ENCODE measurements at regions of chr16 and their contacts with region 1.

Region 1: DNA sequence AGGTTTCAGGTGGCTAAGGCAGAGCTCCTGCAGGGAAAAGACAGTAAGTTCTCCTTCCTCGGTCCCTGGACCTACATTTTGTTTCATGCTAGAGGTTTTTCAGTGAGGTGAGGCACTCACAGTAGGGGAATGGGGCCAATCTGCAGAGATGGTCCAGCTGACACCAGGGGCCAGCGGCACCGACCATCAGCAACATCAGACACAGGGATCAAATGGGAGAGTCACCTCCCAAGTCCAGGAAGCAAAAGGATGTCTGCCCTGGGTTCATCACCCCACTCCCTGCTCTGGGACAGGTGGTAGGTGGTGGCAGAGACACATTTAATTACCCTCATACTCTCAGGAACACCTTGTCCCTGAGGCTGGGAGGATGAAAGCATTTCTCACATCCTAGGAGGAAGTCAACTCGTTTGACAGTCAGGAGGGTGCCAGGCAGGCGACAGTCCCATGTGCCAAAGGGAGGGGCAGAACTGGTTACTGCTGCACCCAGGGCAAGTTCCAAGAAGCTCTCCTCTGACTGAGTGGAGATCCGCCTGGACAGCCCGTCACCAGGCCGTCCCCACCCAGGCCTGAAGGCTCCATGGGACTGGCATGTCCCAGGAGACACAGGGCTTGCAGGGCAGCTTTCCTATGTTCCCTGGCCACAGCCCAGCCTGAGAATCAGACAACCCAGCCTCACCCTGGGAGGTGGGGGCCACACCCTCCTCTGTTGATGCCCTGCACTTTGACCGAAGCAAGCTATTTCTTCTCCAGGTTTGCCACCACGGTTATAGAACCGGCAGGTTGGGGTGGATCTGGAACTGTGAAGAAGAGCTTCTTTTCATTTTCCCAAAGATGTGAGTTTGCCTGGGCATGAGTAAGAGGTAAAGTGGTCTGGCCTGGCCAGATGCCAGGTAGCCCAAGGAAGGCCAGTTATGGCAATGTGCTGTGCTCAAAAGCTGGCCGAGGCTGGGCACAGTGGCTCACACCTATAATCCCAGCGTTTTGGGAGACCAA is 19.1 kb downstream of the ATP6V0D1 start:
- DNase-seq: no peak
- ATAC-seq: no peak

Region 2: DNA sequence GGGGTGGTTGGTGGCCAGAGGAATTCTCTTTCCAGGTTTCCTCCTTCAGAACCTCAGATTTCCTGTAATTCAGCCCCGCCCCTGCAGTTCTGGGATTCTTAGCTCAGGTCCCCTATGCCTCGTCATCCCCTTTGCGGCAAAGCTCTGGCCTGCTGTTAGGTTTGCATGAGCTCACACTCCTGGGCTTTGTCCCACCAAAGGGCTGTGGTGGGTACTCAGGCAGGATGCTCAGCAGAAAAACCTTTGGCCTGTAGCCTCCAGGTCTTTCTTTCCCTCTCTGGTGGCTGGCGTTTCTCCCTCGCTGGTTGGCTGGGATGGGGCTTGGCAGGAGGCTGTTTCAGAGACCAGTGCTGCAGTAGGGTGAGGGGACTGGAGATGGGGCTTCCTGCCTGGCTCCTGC is 192.1 kb before region 1 on chr16:
- intact Hi-C with region 1: loop called (anchors 5 kb)
- DNase-seq: no peak
- ATAC-seq: no peak